Dorsolateral prefrontal cortex (tissue), 120 donors: ENCODE measurements at regions of chr9 and their contacts with region 1.

Region 1: DNA sequence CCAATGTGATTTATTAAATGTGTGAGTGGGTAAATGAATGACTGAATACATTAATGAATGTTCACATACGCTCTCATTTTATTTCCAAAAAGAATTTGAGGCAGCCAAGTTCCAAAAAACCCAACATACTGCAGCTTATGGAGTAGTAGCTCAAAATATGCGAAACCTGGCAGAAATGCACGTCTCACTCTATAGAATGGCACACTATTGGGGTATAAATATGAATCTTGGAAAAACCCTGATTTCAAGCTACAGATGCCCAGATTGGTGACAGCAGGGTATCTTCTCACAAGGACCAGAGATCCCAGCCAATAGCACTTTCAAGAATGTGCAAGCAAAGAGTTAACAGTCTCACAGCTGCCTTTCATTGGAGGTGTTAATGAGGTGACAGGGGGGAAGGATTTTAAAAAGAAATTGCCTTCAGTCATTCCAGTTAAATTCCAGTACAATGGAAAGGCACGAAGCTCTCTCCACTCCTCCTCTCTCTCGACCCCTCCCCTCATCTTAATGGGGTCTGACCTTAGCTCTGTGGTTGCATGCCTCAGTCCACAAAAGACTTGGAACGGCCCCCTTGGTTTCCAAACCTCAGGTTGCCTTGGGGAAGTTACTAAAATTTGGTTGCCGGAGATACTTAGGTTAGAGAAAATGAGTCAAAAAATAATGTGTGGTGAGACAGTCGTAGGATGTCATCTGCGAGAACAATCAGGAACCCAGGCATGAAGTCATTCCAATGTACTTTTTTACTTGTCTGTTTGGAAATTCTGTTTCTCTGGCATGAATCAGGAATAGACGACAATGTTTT is 307.4 kb downstream of the NFIB start:
- DNase-seq: no peak
- H3K4me3 ChIP-seq: no peak overlapping the region
- H3K27ac ChIP-seq: peak overlapping the region in 4 of 59 donors; percentile 11 to 36 (median 26)
- H3K27me3 ChIP-seq: no peaks in the 10 kb centered on the region
- CTCF ChIP-seq: no peak

Region 2: DNA sequence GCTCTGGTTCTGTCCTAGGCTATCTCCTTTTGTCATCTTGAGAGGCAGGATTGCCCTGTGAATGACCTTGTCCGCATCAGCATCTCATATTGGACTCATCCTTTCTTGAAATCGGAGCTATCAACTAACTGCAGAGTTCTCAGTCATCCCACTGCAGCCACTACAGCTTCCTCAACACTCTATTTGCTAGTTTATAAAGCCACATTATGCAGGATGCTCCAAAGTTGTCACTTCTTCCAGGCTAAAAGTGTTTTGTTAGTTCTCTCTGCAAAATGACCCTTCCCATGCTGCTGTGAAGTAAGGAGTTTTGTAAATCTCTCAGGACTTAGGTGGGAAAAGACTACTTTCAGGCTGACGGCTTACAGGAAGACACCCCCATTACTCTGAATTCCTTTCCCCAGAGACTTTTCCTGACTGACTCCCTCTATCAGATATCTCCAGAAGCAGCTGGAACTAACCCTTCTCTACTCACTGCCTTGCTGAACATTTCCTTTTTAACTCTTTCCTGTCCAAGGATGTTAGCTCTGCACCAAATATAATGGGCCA is 49.8 kb after region 1 on chr9:
- intact Hi-C with region 1: loop called in 1 of 2 experiments (anchors 5 kb)
- DNase-seq: no peak
- H3K4me3 ChIP-seq: no peak overlapping the region
- H3K27ac ChIP-seq: no peak overlapping the region
- H3K27me3 ChIP-seq: peaks cover 0 to 2% (median 0%) of the 10 kb centered on the region in 45 donors
- CTCF ChIP-seq: no peak

Region 3: DNA sequence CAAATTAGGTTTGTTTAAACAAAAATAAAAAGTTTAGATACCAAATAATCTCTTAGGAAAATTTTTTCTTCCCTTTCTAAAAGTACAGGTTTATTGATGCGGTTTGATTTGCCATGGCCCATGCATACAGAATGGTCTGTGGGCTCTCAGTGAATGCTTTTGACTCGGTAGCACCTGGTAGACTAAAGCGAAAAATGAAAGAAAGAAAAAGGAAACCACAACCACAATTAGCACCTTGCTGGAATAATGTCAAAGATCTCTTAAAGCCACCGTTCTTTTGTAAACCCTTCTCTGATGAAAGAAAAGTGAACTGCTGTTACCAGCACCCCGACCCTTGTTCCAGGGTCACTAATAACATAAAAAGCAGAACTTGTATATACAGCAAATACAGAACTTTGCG is 149.5 kb after region 1 on chr9:
- intact Hi-C with region 1: no loop called
- DNase-seq: no peak
- H3K4me3 ChIP-seq: no peak overlapping the region
- H3K27ac ChIP-seq: no peak overlapping the region
- H3K27me3 ChIP-seq: no peaks in the 10 kb centered on the region
- CTCF ChIP-seq: no peak